ENCODE measurements at regions of chr1 and their contacts with region 1.

Region 1: DNA sequence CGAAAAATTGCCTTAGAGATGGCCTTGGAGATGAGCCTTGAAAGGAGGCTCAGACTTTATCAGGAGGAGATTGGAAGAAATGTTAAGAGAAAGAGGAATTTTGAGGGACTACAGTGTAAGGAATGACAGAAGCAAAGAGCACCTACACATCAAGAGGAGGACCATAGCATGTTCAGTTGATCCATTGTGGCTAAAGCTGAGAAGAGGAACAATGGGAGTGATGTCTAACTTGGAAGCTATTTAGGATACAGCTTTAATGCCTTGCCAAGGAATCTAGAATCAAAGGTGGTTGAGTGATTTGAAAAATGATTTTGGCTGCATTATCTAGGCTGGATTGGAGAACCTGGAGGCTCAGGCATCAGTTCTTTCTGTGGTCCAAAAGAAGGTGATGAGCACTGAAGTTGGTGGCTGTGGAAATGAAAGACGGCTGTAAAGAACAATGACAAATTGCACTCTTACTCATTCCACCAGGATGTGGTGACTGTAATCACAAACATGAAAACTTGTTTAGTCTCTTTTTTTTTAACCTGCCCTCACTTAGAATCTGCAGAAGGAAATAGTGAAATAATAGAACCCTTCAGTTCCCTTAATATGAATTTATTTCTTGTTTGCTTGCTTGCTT is 11.3 kb downstream of the FAM20B start:
- DNase-seq: peak in 1 of 2 experiments; percentile 93
- H3K4me3 ChIP-seq: peak overlapping the region; percentile 43; the same call in 1 of the 2 replicates
- H3K27ac ChIP-seq: peak overlapping the region; percentile 94
- H3K4me1 ChIP-seq: peaks cover 72% of the 10 kb centered on the region
- H3K27me3 ChIP-seq: no peaks in the 10 kb centered on the region
- CTCF ChIP-seq: no peak

Region 2: GRCh38 chr1:178895928-178896327 is 141.0 kb before region 1 on chr1:
- CTCF ChIA-PET with region 1: no interaction called
- POLR2A ChIA-PET with region 1: interaction called, 32 read pairs
- intact Hi-C with region 1: no loop called
- DNase-seq: no peak
- H3K4me3 ChIP-seq: no peak overlapping the region
- H3K27ac ChIP-seq: no peak overlapping the region
- H3K4me1 ChIP-seq: no peaks in the 10 kb centered on the region
- H3K27me3 ChIP-seq: no peaks in the 10 kb centered on the region
- CTCF ChIP-seq: no peak

Region 3: DNA sequence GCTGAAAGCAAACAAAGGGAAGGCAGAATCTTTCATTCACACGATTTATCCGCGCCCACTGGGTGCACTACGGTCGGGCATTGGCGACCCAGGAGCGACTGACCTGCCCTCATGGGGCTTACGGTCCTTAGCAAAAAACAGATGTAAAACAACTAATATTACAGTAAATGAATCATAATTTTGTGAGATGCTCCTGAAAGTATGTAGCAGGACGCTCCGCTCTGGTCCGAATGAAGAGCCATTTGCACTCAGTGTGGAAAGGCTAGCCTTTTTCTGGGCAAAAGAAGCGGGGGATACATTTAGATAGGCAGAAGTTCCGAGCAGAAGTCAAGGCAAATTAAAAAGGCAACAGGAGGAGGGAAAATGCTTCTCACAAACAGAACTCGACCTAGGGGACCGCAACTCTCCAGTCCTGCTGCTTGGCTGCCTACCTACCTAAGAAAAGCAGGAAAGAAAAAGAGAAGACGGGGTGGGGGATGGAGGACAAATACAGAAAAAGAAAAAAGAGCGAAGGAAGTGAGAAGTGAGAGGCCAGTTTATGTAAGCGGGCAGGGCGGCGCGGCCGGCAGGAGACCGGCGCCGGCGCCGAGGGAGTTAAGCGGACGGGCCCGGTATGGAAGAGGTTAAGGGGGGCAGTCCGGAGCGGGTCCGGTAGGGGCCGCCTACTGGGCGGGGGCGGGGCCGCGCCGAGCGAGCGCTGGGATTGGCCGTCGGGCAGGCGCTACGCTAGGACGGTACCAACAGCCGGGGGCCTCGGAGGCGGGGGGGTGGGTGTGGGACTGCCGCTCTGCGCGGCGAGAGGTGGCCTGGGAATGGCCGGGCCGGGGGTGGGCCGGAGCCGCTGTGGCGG is 11.6 kb before region 1 on chr1 and contains the start of gene FAM20B:
- CTCF ChIA-PET with region 1: no interaction called
- POLR2A ChIA-PET with region 1: no interaction called
- intact Hi-C with region 1: loop called (anchors 1 kb)
- DNase-seq: peak; percentile 81 to 94
- H3K4me3 ChIP-seq: peak within 1 kb of the TSS; percentile 93
- H3K27ac ChIP-seq: peak within 1 kb of the TSS; percentile 98
- H3K4me1 ChIP-seq: peaks cover 37% of the 10 kb centered on the region
- H3K27me3 ChIP-seq: no peaks in the 10 kb centered on the region
- CTCF ChIP-seq: no peak
- total RNA-seq, gene FAM20B: 68.1 and 80.5 TPM in 2 replicates

Region 4: GRCh38 chr1:179058487-179059483 is 21.8 kb after region 1 on chr1:
- CTCF ChIA-PET with region 1: no interaction called
- POLR2A ChIA-PET with region 1: interaction called, 24 read pairs
- intact Hi-C with region 1: loop called (anchors 1 kb)
- DNase-seq: peak in 1 of 2 experiments; percentile 67
- H3K4me3 ChIP-seq: no peak overlapping the region
- H3K27ac ChIP-seq: peak overlapping the region; percentile 96
- H3K4me1 ChIP-seq: peaks cover 54% of the 10 kb centered on the region
- H3K27me3 ChIP-seq: no peaks in the 10 kb centered on the region
- CTCF ChIP-seq: no peak

Region 5: DNA sequence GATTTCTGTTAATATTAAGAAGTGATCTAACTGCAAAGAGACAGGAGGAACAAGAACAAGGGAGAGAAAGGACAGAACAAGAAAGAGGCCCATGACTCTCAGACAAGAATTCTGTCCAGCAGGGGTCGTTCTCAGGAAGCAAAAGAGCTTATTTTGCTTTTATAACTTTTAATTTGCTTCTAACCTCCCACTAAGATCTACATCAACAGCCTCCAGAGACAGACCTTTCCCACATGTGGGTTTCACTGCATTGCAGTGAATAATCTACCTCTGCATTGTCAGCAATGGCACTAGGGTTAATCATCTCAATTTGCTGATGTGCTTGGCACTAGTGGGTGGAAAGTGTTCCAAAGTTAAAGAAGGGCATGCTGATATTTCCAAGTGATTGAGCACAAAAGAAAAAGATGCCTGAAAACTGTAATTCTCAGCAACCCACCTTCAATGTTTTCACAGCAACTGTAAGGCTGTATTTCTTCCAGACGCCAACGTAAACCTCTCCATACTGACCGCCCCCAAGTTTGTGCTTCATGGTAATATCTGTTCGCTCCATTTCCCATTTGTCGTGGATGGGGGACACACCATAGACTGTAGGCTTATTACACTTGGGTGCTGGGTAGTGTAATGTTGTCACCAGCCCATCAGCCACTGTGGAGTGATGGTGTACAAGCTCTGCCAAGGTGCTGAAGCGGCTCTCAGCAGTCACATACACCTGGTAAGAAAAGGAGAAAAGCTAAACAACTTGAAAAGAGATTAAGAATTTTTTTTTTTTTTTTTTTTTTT is 84.4 kb after region 1 on chr1:
- CTCF ChIA-PET with region 1: no interaction called
- POLR2A ChIA-PET with region 1: no interaction called
- intact Hi-C with region 1: no loop called
- DNase-seq: peak; percentile 15 to 40
- H3K4me3 ChIP-seq: no peak overlapping the region
- H3K27ac ChIP-seq: no peak overlapping the region
- H3K4me1 ChIP-seq: no peaks in the 10 kb centered on the region; the same call in 1 of the 2 replicates
- H3K27me3 ChIP-seq: no peaks in the 10 kb centered on the region
- CTCF ChIP-seq: peak; percentile 78